Activated CD8-positive, alpha-beta memory T cell treated with anti-CD3 and anti-CD28 coated beads, Interleukin-2, amount 10 ng/mL, durations not matched to agents 7 days and 5 days (primary cell): ENCODE measurements at regions of chr6 and their contacts with region 1.

Region 1: GRCh38 chr6:151323791-151324487 is 67.4 kb downstream of the ZBTB2 start:
- DNase-seq: peak; percentile 80
- ATAC-seq: peak; percentile 76
- H3K4me3 Mint-ChIP-seq: peak overlapping the region; percentile 35
- H3K27ac Mint-ChIP-seq: no peak overlapping the region
- H3K4me1 Mint-ChIP-seq: peaks cover 23% of the 10 kb centered on the region
- H3K27me3 Mint-ChIP-seq: peaks cover 70% of the 10 kb centered on the region

Region 2: DNA sequence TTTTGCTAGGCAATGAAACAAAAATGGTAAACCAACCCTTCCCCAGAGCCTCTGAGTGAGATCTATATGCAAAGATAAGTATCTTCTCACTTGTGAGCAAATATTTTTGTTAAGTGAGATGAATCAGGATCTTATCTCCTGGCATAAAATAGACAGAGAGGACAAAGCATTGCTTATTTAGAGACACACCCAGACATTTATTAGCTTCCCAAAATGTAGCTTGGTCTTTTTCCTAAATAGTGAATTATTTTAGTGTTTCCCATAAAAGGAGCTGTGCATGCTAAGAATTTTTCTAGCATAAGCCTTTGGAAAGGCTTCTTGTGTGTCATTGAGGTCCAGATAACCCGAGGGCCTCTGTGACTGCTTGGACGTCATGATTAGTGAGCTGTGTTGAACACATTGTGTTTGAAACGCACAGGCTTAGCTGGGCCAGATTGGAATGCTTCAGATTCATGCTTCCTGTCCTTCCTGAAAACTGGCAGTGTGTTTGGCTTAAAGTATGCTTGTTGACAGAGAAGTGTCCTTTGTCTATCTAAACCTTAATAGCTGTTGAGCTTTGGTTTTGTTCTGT is 441.9 kb before region 1 on chr6:
- CTCF ChIA-PET with region 1: interaction called, 15 read pairs
- DNase-seq: no peak
- ATAC-seq: no peak
- H3K4me3 Mint-ChIP-seq: no peak overlapping the region
- H3K27ac Mint-ChIP-seq: no peak overlapping the region
- H3K4me1 Mint-ChIP-seq: peaks cover 8% of the 10 kb centered on the region
- H3K27me3 Mint-ChIP-seq: no peaks in the 10 kb centered on the region

Region 3: DNA sequence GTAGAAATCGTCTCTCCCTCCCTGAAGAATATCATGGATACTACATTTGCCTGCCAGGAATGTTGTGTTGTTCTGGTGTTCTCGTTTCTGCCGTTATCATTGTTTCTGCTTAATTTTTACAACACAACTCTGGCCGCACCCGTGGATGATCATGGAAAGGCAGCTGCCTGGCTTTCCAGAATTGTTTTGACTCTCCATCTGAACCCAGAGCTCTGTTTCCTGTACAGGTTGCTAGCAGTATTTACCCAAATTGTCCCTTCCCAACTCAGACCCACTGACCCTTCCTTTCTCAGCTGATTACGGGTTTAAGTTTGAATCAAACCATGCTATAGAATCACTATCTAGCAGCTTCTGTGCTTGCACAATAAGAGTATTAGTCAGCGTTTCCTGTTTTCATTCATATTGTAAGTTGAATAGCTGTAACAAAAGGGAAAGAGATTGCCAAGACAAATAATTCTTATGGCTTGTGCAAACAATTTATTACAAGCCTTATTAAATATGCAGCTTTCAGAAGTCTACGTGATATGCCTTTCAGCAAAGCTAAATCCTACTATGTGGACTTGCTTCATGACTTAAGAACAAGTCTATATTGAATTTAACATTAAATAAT is 319.4 kb before region 1 on chr6:
- CTCF ChIA-PET with region 1: interaction called, 14 read pairs
- DNase-seq: no peak
- ATAC-seq: peak; percentile 83
- H3K4me3 Mint-ChIP-seq: no peak overlapping the region
- H3K27ac Mint-ChIP-seq: peak overlapping the region; percentile 56
- H3K4me1 Mint-ChIP-seq: peaks cover 19% of the 10 kb centered on the region
- H3K27me3 Mint-ChIP-seq: no peaks in the 10 kb centered on the region

Region 4: DNA sequence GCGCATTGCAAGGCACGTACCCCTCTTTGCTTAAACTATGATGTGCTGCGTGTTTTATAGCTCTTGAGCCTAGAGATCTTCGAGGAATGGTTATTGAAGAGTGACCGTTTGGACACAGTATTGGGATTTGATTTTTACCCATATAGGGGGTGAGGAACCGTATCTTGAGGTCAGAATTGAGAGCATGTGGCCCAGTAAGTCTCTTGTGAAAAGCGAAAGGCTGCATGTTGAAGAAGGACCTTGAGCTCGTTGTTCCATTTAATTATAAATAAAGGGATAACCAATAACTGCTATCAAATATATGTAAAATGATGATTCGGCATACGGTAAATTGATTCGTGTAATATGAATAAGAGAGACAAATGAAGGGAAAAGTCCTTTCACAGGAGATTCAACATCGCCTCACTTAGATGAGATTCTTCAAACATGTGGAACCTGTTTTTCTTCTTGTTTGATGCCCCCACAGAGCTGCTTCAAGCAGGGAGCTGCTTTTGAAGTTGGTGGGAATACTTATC is 17.6 kb before region 1 on chr6:
- CTCF ChIA-PET with region 1: interaction called, 30 read pairs
- DNase-seq: no peak
- ATAC-seq: no peak
- H3K4me3 Mint-ChIP-seq: no peak overlapping the region
- H3K27ac Mint-ChIP-seq: no peak overlapping the region
- H3K4me1 Mint-ChIP-seq: no peaks in the 10 kb centered on the region
- H3K27me3 Mint-ChIP-seq: peaks cover 46% of the 10 kb centered on the region

Region 5: GRCh38 chr6:151340219-151340978 is 16.5 kb after region 1 on chr6:
- CTCF ChIA-PET with region 1: interaction called, 70 read pairs
- DNase-seq: no peak
- ATAC-seq: no peak
- H3K4me3 Mint-ChIP-seq: no peak overlapping the region
- H3K27ac Mint-ChIP-seq: no peak overlapping the region
- H3K4me1 Mint-ChIP-seq: no peaks in the 10 kb centered on the region
- H3K27me3 Mint-ChIP-seq: peaks cover 12% of the 10 kb centered on the region